ENCODE measurements at regions of chr6 and their contacts with region 1.

Region 1: GRCh38 chr6:34459899-34460593 is 5.8 kb upstream of the PACSIN1 start:
- DNase-seq: peak; percentile 69
- ATAC-seq: peak; percentile 90
- H3K4me3 Mint-ChIP-seq: no peak overlapping the region
- H3K27ac Mint-ChIP-seq: no peak overlapping the region
- H3K4me1 Mint-ChIP-seq: no peaks in the 10 kb centered on the region
- H3K27me3 Mint-ChIP-seq: peaks cover 4% of the 10 kb centered on the region
- CTCF ChIP-seq: peak; percentile 85

Region 2: GRCh38 chr6:34392497-34393190 is 67.4 kb before region 1 on chr6 and contains the start of gene NUDT3:
- CTCF ChIA-PET with region 1: no interaction called
- POLR2A ChIA-PET with region 1: no interaction called
- intact Hi-C with region 1: no loop called
- DNase-seq: peak; percentile 96
- ATAC-seq: peak; percentile 94
- H3K4me3 Mint-ChIP-seq: no peak within 1 kb of the TSS
- H3K27ac Mint-ChIP-seq: peak within 1 kb of the TSS; percentile 93
- H3K4me1 Mint-ChIP-seq: peaks cover 20% of the 10 kb centered on the region
- H3K27me3 Mint-ChIP-seq: no peaks in the 10 kb centered on the region
- CTCF ChIP-seq: peak; percentile 76
- total RNA-seq, gene NUDT3: 15.0 to 15.2 TPM

Region 3: GRCh38 chr6:34595332-34596184 is 135.5 kb after region 1 on chr6:
- CTCF ChIA-PET with region 1: interaction called, 13 read pairs
- POLR2A ChIA-PET with region 1: no interaction called
- intact Hi-C with region 1: no loop called
- DNase-seq: no peak
- ATAC-seq: no peak
- H3K4me3 Mint-ChIP-seq: no peak overlapping the region
- H3K27ac Mint-ChIP-seq: no peak overlapping the region
- H3K4me1 Mint-ChIP-seq: peaks cover 37% of the 10 kb centered on the region
- H3K27me3 Mint-ChIP-seq: no peaks in the 10 kb centered on the region
- CTCF ChIP-seq: no peak

Region 4: DNA sequence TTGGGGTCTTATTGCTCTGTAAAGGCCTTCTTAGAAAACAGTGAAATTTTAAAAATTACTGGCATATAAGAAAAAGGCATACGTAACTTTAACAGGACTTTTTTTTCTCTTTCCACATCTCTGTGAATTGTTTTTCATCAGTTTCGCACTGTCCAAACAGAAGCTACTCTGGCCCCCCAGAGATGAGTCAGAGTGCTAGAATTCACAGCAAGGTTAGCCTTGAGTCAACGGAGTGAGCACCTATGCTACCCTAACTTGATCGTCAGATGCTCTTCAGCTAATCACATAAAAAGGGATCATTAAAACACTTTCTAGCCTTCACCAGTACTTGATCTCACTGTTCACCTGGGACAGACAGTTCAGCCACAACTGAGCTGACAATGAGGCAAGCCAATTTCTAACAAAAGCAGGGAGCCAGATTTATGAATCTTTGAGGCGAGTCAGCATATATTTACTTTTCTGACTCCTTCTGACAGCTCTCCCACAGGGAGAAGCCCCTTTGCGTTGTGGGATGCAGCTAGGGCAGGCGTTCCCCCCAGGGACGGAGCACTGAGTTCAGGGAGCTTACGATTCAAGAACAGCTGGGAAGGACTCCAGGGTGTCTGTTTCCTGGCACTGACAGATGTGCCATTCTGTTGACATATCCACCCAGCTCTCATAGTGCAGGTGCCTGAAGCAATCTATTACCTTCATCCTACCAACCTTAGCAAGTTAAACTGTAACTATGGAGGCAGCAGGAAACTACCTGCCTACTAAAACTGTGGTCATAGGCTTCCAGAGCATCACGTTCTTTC is 142.5 kb after region 1 on chr6:
- CTCF ChIA-PET with region 1: interaction called, 119 read pairs
- POLR2A ChIA-PET with region 1: no interaction called
- intact Hi-C with region 1: no loop called
- DNase-seq: no peak
- ATAC-seq: no peak
- H3K4me3 Mint-ChIP-seq: no peak overlapping the region
- H3K27ac Mint-ChIP-seq: no peak overlapping the region
- H3K4me1 Mint-ChIP-seq: peaks cover 31% of the 10 kb centered on the region
- H3K27me3 Mint-ChIP-seq: no peaks in the 10 kb centered on the region
- CTCF ChIP-seq: no peak

Region 5: DNA sequence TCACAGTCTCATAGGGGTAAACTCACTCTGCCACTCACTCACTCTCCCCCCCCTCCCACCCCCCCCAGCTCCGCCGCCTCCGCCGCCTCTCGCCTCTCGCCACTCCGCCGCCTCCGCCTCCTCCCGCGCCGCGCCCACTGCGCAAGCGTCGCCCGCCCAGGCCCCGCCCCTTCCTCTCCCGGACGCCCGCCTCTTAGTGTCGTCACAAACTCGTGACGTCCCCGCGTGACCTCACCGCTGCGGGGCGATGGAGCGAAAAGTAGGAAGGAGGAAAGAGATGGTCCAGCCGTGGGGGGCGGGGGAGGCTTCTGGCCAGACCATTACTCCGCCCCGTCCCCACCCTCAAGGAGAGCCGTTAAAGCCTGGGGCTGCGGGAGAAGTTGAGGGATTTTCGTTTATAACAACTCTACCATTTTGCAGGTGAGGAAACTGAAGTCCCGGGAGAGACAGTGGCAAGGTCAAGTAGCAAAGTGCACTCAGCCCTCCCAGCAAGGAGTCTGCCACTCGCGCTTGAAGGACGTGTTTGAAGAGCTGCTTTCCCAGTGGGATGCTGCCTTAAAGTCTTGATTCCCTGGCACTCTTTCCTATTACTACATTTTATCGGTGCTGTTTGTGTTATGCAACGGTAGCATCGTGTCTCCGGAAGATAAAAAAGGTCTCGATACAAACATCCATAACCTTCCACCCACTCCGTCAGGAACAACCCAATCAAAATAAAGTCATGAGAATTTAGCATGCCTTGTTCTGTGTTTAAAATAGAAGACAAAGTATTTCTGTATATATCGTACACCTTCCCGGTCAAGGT is 236.9 kb after region 1 on chr6 and contains the start of gene ILRUN:
- CTCF ChIA-PET with region 1: no interaction called
- POLR2A ChIA-PET with region 1: no interaction called
- intact Hi-C with region 1: no loop called
- DNase-seq: peak; percentile 97
- ATAC-seq: peak; percentile 92
- H3K4me3 Mint-ChIP-seq: peak within 1 kb of the TSS; percentile 94
- H3K27ac Mint-ChIP-seq: peak within 1 kb of the TSS; percentile 98
- H3K4me1 Mint-ChIP-seq: peaks cover 43% of the 10 kb centered on the region
- H3K27me3 Mint-ChIP-seq: no peaks in the 10 kb centered on the region
- CTCF ChIP-seq: no peak
- total RNA-seq, gene ILRUN: 45.3 to 51.8 TPM